Caco-2 (cell line): ENCODE measurements at regions of chr9 and their contacts with region 1.

Region 1: GRCh38 chr9:119349351-119349825 is 19.8 kb downstream of the BRINP1 start:
- DNase-seq: no peak
- H3K4me3 ChIP-seq: no peak overlapping the region
- H3K4me3 Mint-ChIP-seq: no peak overlapping the region
- H3K27ac Mint-ChIP-seq: no peak overlapping the region
- H3K4me1 ChIP-seq: no peaks in the 10 kb centered on the region
- H3K4me1 Mint-ChIP-seq: no peaks in the 10 kb centered on the region
- H3K27me3 ChIP-seq: no peaks in the 10 kb centered on the region
- H3K27me3 Mint-ChIP-seq: peaks cover 10% of the 10 kb centered on the region
- CTCF ChIP-seq: no peak

Region 2: DNA sequence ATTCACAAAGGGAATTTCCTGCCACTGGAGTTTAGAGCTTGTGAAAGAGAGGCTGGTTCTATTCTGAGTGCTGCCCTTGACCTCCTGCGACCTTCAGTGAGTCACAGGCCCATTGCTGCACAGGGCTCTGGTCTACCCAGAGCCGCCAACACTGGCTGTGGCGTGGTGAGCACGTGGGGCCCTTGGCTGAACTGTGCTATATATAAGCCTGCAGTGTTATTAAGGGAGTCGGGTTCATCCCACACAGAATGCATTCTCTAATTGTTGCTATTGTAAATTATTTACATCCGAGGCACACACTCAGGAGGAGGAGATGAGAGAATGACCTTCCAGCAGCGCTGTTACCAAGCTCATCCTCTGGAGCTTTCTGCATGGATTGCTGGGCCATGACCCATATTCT is 27.2 kb before region 1 on chr9:
- CTCF ChIA-PET with region 1: no interaction called
- POLR2A ChIA-PET with region 1: no interaction called
- intact Hi-C with region 1: loop called (anchors 1 kb)
- DNase-seq: no peak
- H3K4me3 ChIP-seq: no peak overlapping the region
- H3K4me3 Mint-ChIP-seq: no peak overlapping the region
- H3K27ac Mint-ChIP-seq: no peak overlapping the region
- H3K4me1 ChIP-seq: no peaks in the 10 kb centered on the region
- H3K4me1 Mint-ChIP-seq: no peaks in the 10 kb centered on the region
- H3K27me3 ChIP-seq: no peaks in the 10 kb centered on the region
- H3K27me3 Mint-ChIP-seq: peaks cover 3% of the 10 kb centered on the region
- CTCF ChIP-seq: no peak